ENCODE measurements at regions of chr9 and their contacts with region 1.

Region 1: DNA sequence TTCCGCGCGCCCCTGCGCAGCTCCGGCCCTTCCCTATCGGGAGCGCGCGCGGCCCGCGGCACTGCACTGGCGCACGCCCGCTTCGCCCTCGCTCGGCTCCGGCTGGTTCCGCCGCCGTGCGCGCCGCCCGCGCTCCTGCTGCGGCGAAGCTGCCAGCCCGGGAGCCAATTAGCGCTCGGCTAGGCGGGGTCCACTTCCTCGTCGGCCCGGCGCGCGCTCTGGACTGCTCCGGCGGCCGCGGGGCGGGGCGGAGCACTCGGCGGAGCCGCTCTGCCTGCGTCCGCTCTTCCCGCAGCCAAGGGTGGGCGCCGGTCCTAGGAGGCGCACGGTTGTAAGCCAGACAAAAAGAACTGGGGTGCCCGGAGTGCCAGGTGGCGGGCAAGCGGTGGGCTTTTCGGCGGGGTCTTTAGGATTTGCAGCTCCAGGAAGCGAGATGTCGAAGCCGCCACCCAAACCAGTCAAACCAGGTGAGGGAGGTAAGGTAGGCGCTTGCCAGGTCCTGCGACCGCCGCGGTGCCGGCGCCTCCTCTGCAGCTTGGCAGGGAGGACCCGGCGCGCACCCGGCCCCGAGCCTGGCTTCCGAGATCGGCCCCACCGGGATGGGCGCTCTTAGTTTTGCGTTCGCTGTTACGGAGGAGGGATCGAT is at the start of gene OSTF1:
- DNase-seq: peak; percentile 87 to 96 (median 92)
- ATAC-seq: peak; percentile 82 to 87
- H3K4me3 Mint-ChIP-seq: peak within 1 kb of the TSS; percentile 86 to 100 (median 99)
- H3K27ac Mint-ChIP-seq: peak within 1 kb of the TSS; percentile 82 to 98 (median 96)
- H3K4me1 Mint-ChIP-seq: peaks cover 27 to 85% (median 76%) of the 10 kb centered on the region in 4 donors
- H3K27me3 Mint-ChIP-seq: no peaks in the 10 kb centered on the region
- polyA plus RNA-seq, gene OSTF1: 131 to 151 (median 132) TPM

Region 2: GRCh38 chr9:74653410-74654080 is 434.8 kb before region 1 on chr9:
- POLR2A ChIA-PET with region 1: no interaction called
- DNase-seq: no peak
- ATAC-seq: no peak
- H3K4me3 Mint-ChIP-seq: no peak overlapping the region
- H3K27ac Mint-ChIP-seq: no peak overlapping the region
- H3K4me1 Mint-ChIP-seq: no peaks in the 10 kb centered on the region
- H3K27me3 Mint-ChIP-seq: peaks cover 0 to 17% (median 2%) of the 10 kb centered on the region in 5 donors

Region 3: GRCh38 chr9:74952281-74953151 is 135.9 kb before region 1 on chr9 and contains the start of gene C9orf40:
- POLR2A ChIA-PET with region 1: interaction called, 18 read pairs
- DNase-seq: peak; percentile 80 to 93 (median 88)
- ATAC-seq: peak; percentile 88 to 90
- H3K4me3 Mint-ChIP-seq: peak within 1 kb of the TSS; percentile 94 to 99 (median 98)
- H3K27ac Mint-ChIP-seq: peak within 1 kb of the TSS; percentile 91 to 98 (median 96)
- H3K4me1 Mint-ChIP-seq: peaks cover 18 to 24% (median 20%) of the 10 kb centered on the region in 4 donors
- H3K27me3 Mint-ChIP-seq: no peaks in the 10 kb centered on the region
- polyA plus RNA-seq, gene C9orf40: 1.3 to 2.6 (median 1.8) TPM

Region 4: GRCh38 chr9:75027187-75028107 is 60.9 kb before region 1 on chr9:
- POLR2A ChIA-PET with region 1: interaction called, 76 read pairs
- DNase-seq: peak in 8 of 10 donors; percentile 1 to 69 (median 28)
- ATAC-seq: peak; percentile 4 to 31
- H3K4me3 Mint-ChIP-seq: peak overlapping the region; percentile 88 to 98 (median 96)
- H3K27ac Mint-ChIP-seq: peak overlapping the region; percentile 83 to 98 (median 95)
- H3K4me1 Mint-ChIP-seq: peaks cover 16 to 49% (median 43%) of the 10 kb centered on the region in 4 donors
- H3K27me3 Mint-ChIP-seq: no peaks in the 10 kb centered on the region

Region 5: DNA sequence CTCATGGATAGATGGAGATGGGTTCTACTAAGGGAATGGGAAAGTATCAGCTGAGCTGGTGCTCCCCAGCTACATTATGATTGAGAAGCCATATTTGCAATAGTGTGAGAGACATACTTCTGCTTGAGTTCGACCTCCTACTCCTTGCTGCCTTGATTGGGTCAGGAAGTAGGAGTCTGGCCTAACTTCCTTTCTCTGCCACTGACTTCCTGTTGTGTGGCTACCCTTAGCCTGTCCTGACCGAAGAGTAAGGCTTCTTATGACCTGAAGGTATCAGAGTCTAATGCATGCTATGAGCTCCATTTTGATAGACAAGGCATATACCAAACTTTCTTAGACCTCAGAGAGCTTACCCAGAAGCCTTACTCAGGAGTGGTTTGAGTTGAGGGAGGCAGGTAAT is 53.8 kb after region 1 on chr9:
- POLR2A ChIA-PET with region 1: interaction called, 47 read pairs
- DNase-seq: no peak
- ATAC-seq: peak; percentile 46 to 48
- H3K4me3 Mint-ChIP-seq: peak overlapping the region in 9 of 10 donors; percentile 8 to 77 (median 52)
- H3K27ac Mint-ChIP-seq: peak overlapping the region; percentile 79 to 91 (median 84)
- H3K4me1 Mint-ChIP-seq: peaks cover 33 to 90% (median 73%) of the 10 kb centered on the region in 4 donors
- H3K27me3 Mint-ChIP-seq: no peaks in the 10 kb centered on the region

Region 6: DNA sequence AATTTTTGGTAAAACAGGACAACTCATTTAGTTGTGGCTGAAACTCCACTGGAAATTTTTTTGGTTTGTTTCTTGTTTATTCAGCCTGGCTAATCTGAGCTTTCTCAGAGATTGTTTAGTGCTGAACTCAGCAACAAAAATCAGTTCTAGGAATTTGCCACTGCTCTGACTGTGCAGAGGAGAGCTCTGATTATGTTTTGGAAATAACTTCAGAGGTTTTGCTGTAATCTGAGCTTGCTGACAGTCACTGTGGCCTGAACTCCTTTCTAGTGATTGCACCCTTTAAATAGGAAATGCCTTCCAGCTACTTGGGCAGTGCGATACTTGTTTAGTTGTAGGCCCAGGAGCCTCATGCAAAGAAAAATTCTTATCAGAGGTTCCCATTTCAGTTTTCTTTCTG is 60.2 kb after region 1 on chr9:
- POLR2A ChIA-PET with region 1: interaction called, 47 read pairs
- DNase-seq: no peak
- ATAC-seq: peak in 1 of 2 donors; percentile 19
- H3K4me3 Mint-ChIP-seq: peak overlapping the region in 9 of 10 donors; percentile 49 to 89 (median 60)
- H3K27ac Mint-ChIP-seq: peak overlapping the region; percentile 73 to 96 (median 88)
- H3K4me1 Mint-ChIP-seq: peaks cover 28 to 91% (median 77%) of the 10 kb centered on the region in 4 donors
- H3K27me3 Mint-ChIP-seq: no peaks in the 10 kb centered on the region

Region 7: DNA sequence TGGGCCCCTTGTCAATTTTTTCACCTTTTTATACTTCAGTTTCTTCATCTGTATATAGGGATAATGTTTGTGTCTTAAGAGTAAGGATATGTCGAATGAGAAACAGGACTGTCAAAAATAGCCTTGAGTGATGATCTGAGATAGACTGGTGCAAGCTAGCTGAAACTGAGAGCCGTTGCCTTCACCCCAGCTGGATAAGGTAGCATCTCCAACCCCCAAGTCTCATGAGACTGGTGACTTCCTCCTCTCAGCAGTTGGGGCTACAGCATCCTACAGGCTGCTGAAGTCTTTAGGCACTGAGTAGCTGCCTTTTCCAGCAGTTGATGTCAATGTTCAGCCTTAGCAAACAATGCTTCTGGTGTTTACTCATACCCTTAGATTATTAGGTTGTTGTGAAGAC is 330.1 kb after region 1 on chr9:
- POLR2A ChIA-PET with region 1: no interaction called
- DNase-seq: no peak
- ATAC-seq: no peak
- H3K4me3 Mint-ChIP-seq: no peak overlapping the region
- H3K27ac Mint-ChIP-seq: no peak overlapping the region
- H3K4me1 Mint-ChIP-seq: peaks cover 0 to 2% (median 0%) of the 10 kb centered on the region in 4 donors
- H3K27me3 Mint-ChIP-seq: peaks cover 0 to 14% (median 9%) of the 10 kb centered on the region in 5 donors

Region 8: DNA sequence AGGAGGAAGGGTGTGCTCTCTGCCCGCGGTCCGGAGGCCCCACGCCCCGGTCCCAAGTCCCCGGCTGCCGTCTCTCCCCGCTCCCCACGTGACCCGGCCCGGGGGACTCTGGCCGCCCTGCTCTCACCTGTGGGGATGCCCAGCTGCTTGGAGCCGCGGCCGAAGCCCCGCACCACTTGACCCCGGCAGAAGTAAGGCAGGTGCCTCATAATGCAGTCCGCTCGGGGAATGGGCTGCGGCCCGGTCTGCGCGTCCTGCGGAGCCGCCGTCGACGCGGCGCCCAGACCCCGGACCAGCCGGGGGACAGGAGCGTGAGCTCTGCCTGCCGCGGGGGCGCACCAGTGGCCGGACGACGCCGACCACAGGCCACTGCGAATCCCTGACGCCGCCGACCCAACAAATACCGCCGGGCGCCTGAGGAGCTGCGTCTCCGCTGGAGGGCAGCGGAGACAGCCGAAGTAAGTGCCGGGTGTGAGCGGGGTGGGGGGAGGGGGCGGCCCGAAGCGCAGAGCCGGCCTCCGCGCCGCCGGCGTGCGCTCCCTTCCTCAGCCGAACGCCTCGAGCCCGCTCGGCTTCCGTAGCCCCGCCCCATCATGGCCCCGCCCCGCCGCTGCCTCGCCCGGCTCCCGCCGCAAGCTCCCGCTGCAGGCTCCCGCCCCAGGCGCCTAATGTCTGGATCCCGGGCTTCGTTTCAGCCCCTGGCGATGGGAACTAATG is 1305.7 kb after region 1 on chr9 and contains the start of gene RFK:
- POLR2A ChIA-PET with region 1: interaction called, 11 read pairs
- DNase-seq: peak in 9 of 10 donors; percentile 86 to 98 (median 93)
- ATAC-seq: peak; percentile 85 to 89
- H3K4me3 Mint-ChIP-seq: peak within 1 kb of the TSS; percentile 93 to 100 (median 96)
- H3K27ac Mint-ChIP-seq: peak within 1 kb of the TSS; percentile 95 to 100 (median 98)
- H3K4me1 Mint-ChIP-seq: peaks cover 6 to 42% (median 28%) of the 10 kb centered on the region in 4 donors
- H3K27me3 Mint-ChIP-seq: no peaks in the 10 kb centered on the region
- polyA plus RNA-seq, gene RFK: 18.9 to 24.1 (median 24.1) TPM